Activated naive CD4-positive, alpha-beta T cell treated with anti-CD3 and anti-CD28 coated beads for 36 hours (primary cell): ENCODE measurements at regions of chr11 and their contacts with region 1.

Region 1: DNA sequence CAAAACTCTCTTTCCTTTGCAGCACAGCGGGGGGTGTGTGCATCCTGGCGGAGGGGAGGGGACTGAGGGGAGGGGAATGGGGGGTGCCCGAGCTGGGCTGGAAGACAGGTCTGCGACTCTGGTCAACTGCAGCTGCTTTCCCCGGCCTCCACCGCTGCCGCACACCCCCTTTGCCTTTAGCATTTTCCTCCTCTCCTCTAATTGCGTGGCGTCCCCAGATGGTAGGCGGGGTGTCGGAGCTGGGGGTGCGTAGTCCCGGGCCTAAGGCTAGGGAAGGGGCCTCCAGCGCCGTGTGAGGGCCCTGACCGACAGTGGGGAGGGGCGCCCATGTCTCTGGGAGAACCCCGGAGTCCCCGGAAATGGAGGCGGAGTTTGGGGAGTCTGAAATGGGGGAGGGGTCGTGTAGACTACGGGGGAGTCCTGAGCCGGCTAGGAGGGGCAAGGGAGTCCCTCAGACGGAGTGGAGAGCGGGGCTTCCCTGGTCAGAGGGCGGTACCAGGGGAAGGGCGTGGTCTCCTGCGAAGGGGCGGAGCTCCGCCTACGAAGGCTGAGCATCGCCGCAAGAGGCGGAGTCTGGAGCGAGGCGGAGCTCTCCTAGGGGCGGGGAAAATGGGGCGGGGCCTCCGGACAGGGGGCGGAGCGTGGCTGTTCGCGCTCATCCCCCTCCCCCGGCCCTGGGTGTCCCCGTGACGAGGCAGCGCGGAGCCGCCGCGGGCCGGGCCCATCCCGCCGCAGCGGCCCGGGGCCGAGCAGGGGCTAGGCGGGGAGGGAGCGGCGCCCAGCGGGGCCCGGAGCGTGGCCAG is at the start of gene PELI3:
- DNase-seq: peak; percentile 96
- H3K4me3 Mint-ChIP-seq: peak within 1 kb of the TSS; percentile 85
- H3K27ac Mint-ChIP-seq: peak within 1 kb of the TSS; percentile 75
- H3K4me1 Mint-ChIP-seq: peaks cover 33% of the 10 kb centered on the region
- H3K27me3 Mint-ChIP-seq: no peaks in the 10 kb centered on the region
- total RNA-seq, gene PELI3: 2.3 to 2.4 TPM

Region 2: GRCh38 chr11:66421492-66422205 is 44.8 kb before region 1 on chr11:
- CTCF ChIA-PET with region 1: no interaction called
- intact Hi-C with region 1: loop called (anchors 1 kb)
- DNase-seq: peak; percentile 93
- H3K4me3 Mint-ChIP-seq: no peak overlapping the region
- H3K27ac Mint-ChIP-seq: no peak overlapping the region
- H3K4me1 Mint-ChIP-seq: peaks cover 28% of the 10 kb centered on the region
- H3K27me3 Mint-ChIP-seq: peaks cover 32% of the 10 kb centered on the region

Region 3: GRCh38 chr11:66480117-66480938 is 13.9 kb after region 1 on chr11 and contains the start of gene DPP3:
- CTCF ChIA-PET with region 1: interaction called, 16 read pairs
- intact Hi-C with region 1: loop called (anchors 1 kb)
- DNase-seq: peak; percentile 97
- H3K4me3 Mint-ChIP-seq: peak within 1 kb of the TSS; percentile 89
- H3K27ac Mint-ChIP-seq: peak within 1 kb of the TSS; percentile 84
- H3K4me1 Mint-ChIP-seq: peaks cover 25% of the 10 kb centered on the region
- H3K27me3 Mint-ChIP-seq: no peaks in the 10 kb centered on the region
- total RNA-seq, gene DPP3: 73.8 to 80.1 TPM

Region 4: GRCh38 chr11:66491315-66491935 is 25.0 kb after region 1 on chr11:
- CTCF ChIA-PET with region 1: no interaction called
- intact Hi-C with region 1: no loop called
- DNase-seq: no peak
- H3K4me3 Mint-ChIP-seq: no peak overlapping the region
- H3K27ac Mint-ChIP-seq: no peak overlapping the region
- H3K4me1 Mint-ChIP-seq: no peaks in the 10 kb centered on the region
- H3K27me3 Mint-ChIP-seq: no peaks in the 10 kb centered on the region

Region 5: DNA sequence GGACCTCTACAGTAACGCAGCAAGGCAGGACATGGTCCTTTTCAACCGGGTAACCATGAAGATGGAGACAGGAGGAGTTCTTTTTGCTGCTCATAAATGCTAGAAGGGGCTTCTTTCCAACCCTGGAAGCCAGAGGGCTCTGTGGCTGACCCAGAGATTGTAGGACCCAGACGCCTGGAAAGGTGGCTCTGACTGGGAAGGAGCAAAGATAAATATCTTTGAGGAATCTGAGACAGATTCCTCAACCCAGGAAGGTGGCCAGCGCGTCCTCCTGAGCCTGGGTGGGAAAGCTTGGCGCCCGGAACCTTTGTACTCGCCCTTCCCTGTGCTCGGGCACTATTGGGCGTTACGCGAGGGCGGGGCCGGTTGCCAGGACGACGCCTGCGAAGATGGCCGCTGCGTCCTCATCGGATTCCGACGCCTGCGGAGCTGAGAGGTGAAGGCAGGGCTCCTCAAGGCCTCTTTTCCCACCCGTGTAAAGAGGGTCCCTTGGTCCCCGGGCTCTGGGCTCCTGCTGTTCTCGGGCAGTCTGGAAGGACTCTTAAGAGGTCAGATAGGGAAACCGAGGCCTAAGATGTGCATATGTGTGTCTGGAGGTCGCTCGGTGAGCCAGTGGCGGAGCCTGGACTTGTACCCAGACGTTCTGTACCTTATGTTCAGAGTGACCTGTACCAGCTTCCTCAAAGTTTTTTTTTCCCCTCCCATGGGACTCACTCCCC is 44.0 kb after region 1 on chr11 and contains the start of gene BBS1:
- CTCF ChIA-PET with region 1: interaction called, 3 read pairs
- intact Hi-C with region 1: loop called (anchors 2 kb)
- DNase-seq: peak; percentile 85
- H3K4me3 Mint-ChIP-seq: peak within 1 kb of the TSS; percentile 89
- H3K27ac Mint-ChIP-seq: no peak within 1 kb of the TSS
- H3K4me1 Mint-ChIP-seq: peaks cover 15% of the 10 kb centered on the region
- H3K27me3 Mint-ChIP-seq: no peaks in the 10 kb centered on the region
- total RNA-seq, gene BBS1: 10.1 to 10.9 TPM